ENCODE measurements at regions of chr11 and their contacts with region 1.

Region 1: DNA sequence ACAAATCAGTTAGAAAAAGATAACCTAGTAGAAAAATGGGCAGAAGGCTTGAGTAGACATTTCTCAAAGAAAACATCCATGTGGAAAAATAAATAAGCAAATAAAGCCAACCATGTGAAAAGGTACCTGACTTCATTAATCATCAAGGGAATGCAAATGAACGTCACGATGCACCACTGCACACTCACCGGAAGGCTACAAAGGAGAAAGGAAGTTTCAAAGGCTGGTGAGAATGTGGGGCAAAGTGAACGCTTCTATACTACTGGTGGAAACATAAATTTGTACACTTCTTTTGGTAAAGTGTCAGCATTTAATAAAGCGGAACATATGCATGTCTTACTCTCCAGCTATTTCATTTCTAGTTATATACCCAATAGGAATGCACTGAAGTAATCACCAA is 166.8 kb downstream of the CSNK2A3 start:
- DNase-seq: no peak
- ATAC-seq: no peak
- H3K4me3 ChIP-seq: no peak overlapping the region
- H3K27ac ChIP-seq: no peak overlapping the region
- H3K4me1 ChIP-seq: no peaks in the 10 kb centered on the region
- H3K27me3 ChIP-seq: no peaks in the 10 kb centered on the region; the same call in none of the 2 replicates
- CTCF ChIP-seq: no peak

Region 2: GRCh38 chr11:10160350-10160749 is 1025.9 kb before region 1 on chr11:
- CTCF ChIA-PET with region 1: no interaction called
- POLR2A ChIA-PET with region 1: interaction called, 11 read pairs
- in situ Hi-C with region 1: no loop called
- intact Hi-C with region 1: no loop called
- DNase-seq: no peak
- ATAC-seq: no peak
- H3K4me3 ChIP-seq: no peak overlapping the region
- H3K27ac ChIP-seq: no peak overlapping the region; the same call in 1 of the 2 replicates
- H3K4me1 ChIP-seq: peaks cover 14% of the 10 kb centered on the region
- H3K27me3 ChIP-seq: no peaks in the 10 kb centered on the region
- CTCF ChIP-seq: no peak

Region 3: DNA sequence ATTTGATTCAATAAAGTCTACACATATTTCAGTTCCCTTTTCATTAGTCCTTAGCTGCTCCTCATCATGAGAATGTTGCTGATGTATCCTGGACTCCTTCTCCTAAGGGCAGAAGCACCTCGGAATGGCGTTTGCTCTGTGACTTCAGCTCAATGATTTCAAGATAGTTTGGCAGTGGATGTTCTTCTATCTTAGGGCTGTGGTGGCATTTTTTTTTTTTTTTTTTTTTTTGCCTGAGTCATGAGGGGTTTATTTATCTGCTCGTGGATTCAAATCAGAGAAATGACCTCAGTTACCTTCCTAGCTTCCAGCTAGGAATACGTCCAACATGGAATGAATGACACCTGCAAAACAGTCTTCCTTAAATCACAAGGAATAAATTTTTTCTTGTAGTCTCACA is 108.4 kb before region 1 on chr11:
- CTCF ChIA-PET with region 1: no interaction called
- POLR2A ChIA-PET with region 1: interaction called, 11 read pairs
- in situ Hi-C with region 1: no loop called
- intact Hi-C with region 1: no loop called
- DNase-seq: no peak
- ATAC-seq: no peak
- H3K4me3 ChIP-seq: no peak overlapping the region
- H3K27ac ChIP-seq: no peak overlapping the region
- H3K4me1 ChIP-seq: no peaks in the 10 kb centered on the region
- H3K27me3 ChIP-seq: peaks cover 10% of the 10 kb centered on the region
- CTCF ChIP-seq: no peak

Measured in Panc1 (cell line).